ENCODE measurements at regions of chr5 and their contacts with region 1.

Region 1: DNA sequence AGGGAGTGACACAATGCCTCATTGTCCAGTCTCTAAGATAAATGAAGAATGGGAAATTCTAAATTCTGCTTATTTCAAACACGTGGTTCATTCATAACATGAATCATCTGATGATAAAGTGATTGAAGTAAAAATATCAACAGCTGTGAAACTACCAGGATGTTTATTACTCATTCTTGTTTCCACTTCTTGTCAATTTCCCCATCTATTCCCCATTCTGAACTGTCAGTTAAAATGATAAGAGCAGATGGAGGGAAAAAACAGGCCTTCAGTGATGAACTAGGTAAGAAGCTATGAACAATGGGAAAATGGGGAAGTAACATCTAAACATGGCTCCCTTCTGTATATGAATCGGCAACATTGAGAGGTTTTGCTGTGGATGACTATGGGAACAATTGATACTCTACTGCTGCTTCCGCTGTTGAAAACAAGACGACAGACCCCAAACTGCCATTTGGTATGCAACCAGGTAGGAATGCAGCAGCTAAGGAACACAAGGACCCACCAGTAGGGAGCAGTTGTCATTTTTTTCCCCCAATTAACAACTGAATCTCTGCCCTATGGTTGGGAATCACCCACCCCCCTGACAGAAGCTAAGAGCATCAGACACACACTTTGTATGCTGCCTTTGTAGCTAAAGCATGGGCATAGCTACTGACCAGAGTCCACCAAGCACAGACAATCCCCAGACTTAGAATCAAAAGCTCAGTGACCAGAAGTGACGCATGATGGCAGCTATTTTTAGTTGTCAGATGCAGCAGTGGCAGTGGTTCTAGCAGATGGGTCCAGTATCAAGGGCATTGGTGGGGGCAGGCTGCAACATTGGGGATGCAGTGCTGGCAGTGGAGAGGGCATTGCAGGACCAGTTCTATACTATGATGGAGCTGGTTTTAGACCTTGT is 52.9 kb upstream of the ZNF366 start:
- DNase-seq: no peak
- ATAC-seq: no peak

Region 2: DNA sequence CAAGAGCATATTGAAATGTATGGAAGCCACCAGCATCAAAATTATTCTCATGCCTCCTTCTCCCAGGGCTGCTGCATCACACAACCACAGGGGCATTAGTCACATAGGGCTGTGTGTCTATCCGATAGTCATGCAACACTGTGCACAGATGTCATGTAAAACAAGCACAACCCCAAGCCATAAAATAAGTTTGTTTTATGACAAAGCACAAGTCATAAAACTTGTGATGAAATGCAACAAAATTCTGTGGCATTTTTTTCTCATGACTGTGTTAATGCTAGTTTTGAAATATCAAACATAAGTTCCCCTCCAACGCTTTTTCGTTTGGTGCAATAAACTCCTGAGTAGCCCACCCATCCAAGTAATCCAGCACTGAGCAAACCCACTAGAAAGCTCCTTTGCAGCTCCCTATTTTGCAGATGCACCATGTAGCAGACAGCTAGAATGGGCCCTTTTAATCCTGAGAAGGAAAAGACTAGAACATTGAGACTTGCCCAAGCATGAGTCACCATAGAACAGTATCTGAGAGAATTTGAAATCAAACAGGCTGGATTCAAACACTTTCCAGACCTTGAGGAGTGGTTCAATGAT is 40.4 kb after region 1 on chr5:
- intact Hi-C with region 1: loop called (anchors 2 kb)
- DNase-seq: no peak
- ATAC-seq: no peak